ENCODE measurements at regions of chr7 and their contacts with region 1.

Region 1: GRCh38 chr7:149633976-149634945 is 136.7 kb upstream of the ZNF746 start:
- DNase-seq: no peak
- H3K4me3 ChIP-seq: no peak overlapping the region
- H3K27ac ChIP-seq: no peak overlapping the region
- H3K4me1 ChIP-seq: no peaks in the 10 kb centered on the region
- H3K27me3 ChIP-seq: peaks cover 2% of the 10 kb centered on the region
- CTCF ChIP-seq: no peak

Region 2: GRCh38 chr7:149680331-149681025 is 46.2 kb after region 1 on chr7:
- CTCF ChIA-PET with region 1: no interaction called
- dilution Hi-C with region 1: loop called (anchors 5 kb)
- in situ Hi-C with region 1: no loop called
- intact Hi-C with region 1: no loop called
- DNase-seq: no peak
- H3K4me3 ChIP-seq: no peak overlapping the region
- H3K27ac ChIP-seq: no peak overlapping the region
- H3K4me1 ChIP-seq: no peaks in the 10 kb centered on the region
- H3K27me3 ChIP-seq: no peaks in the 10 kb centered on the region
- CTCF ChIP-seq: no peak

Measured in mammary epithelial cell (primary cell).